ENCODE measurements at regions of chr12 and their contacts with region 1.

Region 1: DNA sequence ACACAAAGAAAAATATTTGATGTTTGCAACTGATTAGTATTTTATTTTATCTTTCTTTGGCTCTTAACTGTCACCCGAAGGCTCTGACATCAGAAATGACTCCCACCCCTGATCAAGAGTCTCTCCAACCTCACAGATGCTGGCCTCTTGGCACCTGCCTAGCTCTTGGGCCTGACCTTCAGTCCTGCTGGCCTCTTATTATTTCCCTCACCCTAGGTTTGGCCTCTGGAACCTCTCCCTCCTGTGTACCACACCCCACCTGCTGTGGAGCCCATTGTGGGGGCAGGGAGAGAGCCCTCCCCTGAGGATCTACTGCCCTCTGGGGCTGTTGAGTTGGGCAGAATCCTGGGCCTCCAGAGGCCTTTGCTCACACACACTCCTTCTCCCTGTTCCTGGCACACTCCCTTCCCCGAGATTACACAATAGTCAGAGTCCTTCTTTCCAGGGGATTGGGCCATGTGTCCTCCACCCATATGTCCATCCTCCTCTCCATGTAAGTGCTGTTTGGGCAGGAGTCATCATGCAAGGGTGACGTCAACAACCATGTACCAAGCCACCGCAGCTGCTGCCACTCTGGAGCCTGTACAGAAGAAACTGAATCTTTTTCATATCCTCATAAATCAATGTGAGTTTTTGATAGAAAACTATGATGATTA is 124.3 kb downstream of the RASSF9 start:
- DNase-seq: peak in 3 of 5 donors; percentile 19 to 55 (median 38)
- ATAC-seq: peak; percentile 55 to 94 (median 79)
- H3K4me3 ChIP-seq: no peak overlapping the region
- H3K27ac ChIP-seq: peak overlapping the region in 6 of 12 donors; percentile 10 to 45 (median 40)
- H3K4me1 ChIP-seq: peaks cover 0 to 30% (median 13%) of the 10 kb centered on the region in 12 donors
- H3K27me3 ChIP-seq: no peaks in the 10 kb centered on the region
- CTCF ChIP-seq: no peak
- POLR2A ChIP-seq: no peak

Region 2: DNA sequence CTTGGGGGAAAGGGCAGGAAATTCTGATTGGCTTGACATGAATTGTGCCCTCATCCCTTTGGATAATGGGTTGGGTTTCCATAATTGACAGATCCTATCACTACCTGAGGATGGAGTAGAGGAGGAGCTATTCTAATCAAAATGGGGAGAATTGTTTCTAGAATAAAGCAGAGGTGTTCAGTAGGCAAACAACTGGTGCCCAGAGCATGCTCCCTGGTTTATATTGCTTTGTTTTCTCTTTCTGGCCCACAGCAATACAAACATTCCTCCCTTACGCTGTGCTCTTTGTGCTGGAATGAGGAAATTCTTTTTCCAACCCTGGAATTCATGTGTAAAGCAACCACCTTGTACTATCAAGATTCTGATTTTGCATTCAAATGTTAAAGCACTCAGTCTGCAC is 23.0 kb before region 1 on chr12:
- intact Hi-C with region 1: no loop called
- DNase-seq: no peak
- ATAC-seq: no peak
- H3K4me3 ChIP-seq: no peak overlapping the region
- H3K27ac ChIP-seq: no peak overlapping the region
- H3K4me1 ChIP-seq: no peaks in the 10 kb centered on the region
- H3K27me3 ChIP-seq: no peaks in the 10 kb centered on the region
- CTCF ChIP-seq: no peak
- POLR2A ChIP-seq: no peak

Region 3: DNA sequence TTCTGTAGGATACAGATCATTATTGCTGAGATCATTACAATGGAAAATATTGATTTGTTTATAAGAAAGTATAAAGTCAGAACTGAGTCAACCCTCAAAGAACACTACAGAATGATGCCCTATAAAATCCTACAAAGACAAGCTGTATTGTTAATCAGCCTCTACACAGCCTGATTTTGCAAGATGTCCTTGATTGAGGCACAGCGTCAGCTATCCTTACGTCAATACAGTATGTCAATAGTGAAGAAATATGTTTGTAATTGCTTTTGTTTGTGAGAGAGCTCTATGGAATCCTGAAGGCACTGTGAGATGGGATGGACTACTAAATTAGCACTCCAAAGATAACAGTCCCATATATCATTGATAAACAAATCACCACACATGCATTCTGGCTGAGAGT is 53.6 kb after region 1 on chr12:
- intact Hi-C with region 1: no loop called
- DNase-seq: no peak
- ATAC-seq: no peak
- H3K4me3 ChIP-seq: no peak overlapping the region
- H3K27ac ChIP-seq: no peak overlapping the region
- H3K4me1 ChIP-seq: no peaks in the 10 kb centered on the region
- H3K27me3 ChIP-seq: no peaks in the 10 kb centered on the region
- CTCF ChIP-seq: no peak
- POLR2A ChIP-seq: no peak

Region 4: DNA sequence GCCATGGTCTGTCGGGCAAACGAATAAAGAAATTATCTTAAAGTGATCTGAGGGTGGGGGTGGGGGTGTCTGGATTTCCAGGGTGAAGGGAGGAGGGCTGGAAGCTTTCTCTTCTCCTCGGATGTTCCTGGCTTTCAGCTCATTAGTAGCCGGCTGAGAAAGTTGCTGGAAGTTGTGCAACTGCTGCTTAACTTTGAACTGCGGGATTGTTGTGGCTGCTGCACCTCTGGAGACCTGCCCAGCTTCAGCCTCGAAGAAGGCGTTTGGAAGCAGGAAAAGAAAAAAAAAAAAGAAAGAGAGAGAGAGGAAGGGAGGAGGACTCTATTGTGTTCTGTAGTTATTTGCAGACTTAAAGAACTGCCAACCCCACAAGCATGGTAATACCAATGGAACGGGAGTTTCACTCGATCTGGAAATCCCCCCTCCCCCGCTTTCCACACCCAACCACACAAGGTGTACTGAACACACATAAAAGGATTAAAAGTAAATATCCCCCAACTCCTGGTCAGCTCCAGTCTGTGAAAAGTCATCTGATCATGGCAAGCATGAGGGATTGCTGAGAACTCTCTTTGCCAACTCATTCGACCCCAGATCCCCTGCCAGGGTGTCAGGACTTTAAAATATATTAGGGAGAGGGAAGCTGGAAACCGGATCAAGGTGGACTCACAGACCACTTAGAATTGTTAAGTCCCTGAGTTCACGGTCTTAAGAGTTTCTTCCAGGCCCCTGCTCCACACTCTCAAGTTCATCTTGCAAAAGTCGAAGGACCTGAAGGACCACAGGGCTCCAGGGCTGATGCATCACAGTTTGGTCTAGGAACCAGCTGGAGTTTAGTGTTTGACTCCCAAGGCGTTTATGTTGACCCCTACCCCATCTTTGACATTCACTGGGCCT is 124.6 kb after region 1 on chr12 and contains the start of gene RASSF9:
- intact Hi-C with region 1: loop called in 1 of 10 experiments (anchors 10 kb)
- DNase-seq: peak; percentile 62 to 78 (median 68)
- ATAC-seq: peak; percentile 69 to 94 (median 88)
- H3K4me3 ChIP-seq: peak within 1 kb of the TSS; percentile 30 to 76 (median 63)
- H3K27ac ChIP-seq: peak within 1 kb of the TSS; percentile 58 to 88 (median 82)
- H3K4me1 ChIP-seq: peaks cover 0 to 32% (median 8%) of the 10 kb centered on the region in 12 donors
- H3K27me3 ChIP-seq: no peaks in the 10 kb centered on the region
- CTCF ChIP-seq: no peak
- POLR2A ChIP-seq: no peak
- total RNA-seq, gene RASSF9: 3.1 to 11.5 (median 5.8) TPM

Measured in heart left ventricle (tissue), 16 donors.